ENCODE measurements at regions of chr2 and their contacts with region 1.

Region 1: GRCh38 chr2:185372188-185372587 is 366.4 kb upstream of the FSIP2 start:
- DNase-seq: no peak
- H3K4me3 ChIP-seq: no peak overlapping the region
- H3K4me3 Mint-ChIP-seq: no peak overlapping the region
- H3K27ac ChIP-seq: no peak overlapping the region
- H3K27ac Mint-ChIP-seq: no peak overlapping the region
- H3K4me1 ChIP-seq: no peaks in the 10 kb centered on the region
- H3K4me1 Mint-ChIP-seq: no peaks in the 10 kb centered on the region
- H3K27me3 ChIP-seq: no peaks in the 10 kb centered on the region
- H3K27me3 Mint-ChIP-seq: no peaks in the 10 kb centered on the region

Region 2: DNA sequence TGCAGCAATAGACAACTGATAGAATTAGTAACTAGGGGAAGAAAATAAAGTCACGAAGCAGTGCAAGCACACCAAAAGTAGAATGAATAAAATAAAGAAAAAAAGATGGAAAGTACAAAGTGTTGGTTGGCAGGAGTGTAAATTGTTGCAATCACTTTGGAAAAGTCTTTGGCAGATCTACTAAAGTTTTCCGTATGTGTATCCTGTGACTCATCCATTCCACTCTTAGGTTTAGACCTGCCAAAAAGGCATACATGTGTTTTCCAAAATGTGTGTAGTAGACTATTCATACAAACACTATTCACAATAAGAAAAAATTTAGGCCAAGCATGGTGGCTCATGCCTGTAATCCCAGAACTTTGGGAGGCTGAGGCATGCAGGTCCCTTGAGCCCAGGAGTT is 84.3 kb after region 1 on chr2:
- CTCF ChIA-PET with region 1: no interaction called
- POLR2A ChIA-PET with region 1: interaction called, 11 read pairs
- DNase-seq: no peak
- H3K4me3 ChIP-seq: no peak overlapping the region
- H3K4me3 Mint-ChIP-seq: no peak overlapping the region
- H3K27ac ChIP-seq: no peak overlapping the region
- H3K27ac Mint-ChIP-seq: no peak overlapping the region
- H3K4me1 ChIP-seq: no peaks in the 10 kb centered on the region
- H3K4me1 Mint-ChIP-seq: no peaks in the 10 kb centered on the region
- H3K27me3 ChIP-seq: no peaks in the 10 kb centered on the region
- H3K27me3 Mint-ChIP-seq: no peaks in the 10 kb centered on the region

Measured in CD8-positive, alpha-beta memory T cell (primary cell).